OCI-LY7 (cell line): ENCODE measurements at regions of chr17 and their contacts with region 1.

Region 1: DNA sequence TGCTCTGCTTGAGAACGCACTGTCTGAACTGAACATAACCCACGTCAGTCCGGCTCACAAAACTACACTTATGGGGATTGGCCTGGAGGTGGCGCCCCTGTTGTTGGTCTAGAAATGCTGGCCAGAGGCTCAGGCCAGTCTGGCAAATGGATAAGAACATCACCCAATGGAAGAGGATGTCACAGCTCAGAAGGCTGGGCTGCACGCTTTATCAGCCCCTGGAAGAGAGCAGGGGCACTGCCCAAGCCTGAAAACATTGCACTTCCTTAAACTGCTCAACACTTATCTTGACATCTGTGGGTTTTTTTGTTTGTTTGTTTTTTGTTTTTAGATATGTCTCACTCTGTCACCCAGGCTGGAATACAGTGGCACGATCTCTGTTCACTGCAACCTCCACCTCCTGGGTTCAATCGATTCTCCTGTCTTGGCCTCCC is 24.8 kb upstream of the BPTF start:
- DNase-seq: peak; percentile 87
- H3K4me3 ChIP-seq: no peak overlapping the region
- H3K27ac ChIP-seq: no peak overlapping the region
- H3K4me1 ChIP-seq: peaks cover 23% of the 10 kb centered on the region
- CTCF ChIP-seq: peak; percentile 89

Region 2: GRCh38 chr17:67624886-67625656 is 175.4 kb before region 1 on chr17:
- CTCF ChIA-PET with region 1: no interaction called
- POLR2A ChIA-PET with region 1: no interaction called
- intact Hi-C with region 1: no loop called
- DNase-seq: no peak
- H3K4me3 ChIP-seq: no peak overlapping the region
- H3K27ac ChIP-seq: no peak overlapping the region
- H3K4me1 ChIP-seq: no peaks in the 10 kb centered on the region
- CTCF ChIP-seq: no peak

Region 3: DNA sequence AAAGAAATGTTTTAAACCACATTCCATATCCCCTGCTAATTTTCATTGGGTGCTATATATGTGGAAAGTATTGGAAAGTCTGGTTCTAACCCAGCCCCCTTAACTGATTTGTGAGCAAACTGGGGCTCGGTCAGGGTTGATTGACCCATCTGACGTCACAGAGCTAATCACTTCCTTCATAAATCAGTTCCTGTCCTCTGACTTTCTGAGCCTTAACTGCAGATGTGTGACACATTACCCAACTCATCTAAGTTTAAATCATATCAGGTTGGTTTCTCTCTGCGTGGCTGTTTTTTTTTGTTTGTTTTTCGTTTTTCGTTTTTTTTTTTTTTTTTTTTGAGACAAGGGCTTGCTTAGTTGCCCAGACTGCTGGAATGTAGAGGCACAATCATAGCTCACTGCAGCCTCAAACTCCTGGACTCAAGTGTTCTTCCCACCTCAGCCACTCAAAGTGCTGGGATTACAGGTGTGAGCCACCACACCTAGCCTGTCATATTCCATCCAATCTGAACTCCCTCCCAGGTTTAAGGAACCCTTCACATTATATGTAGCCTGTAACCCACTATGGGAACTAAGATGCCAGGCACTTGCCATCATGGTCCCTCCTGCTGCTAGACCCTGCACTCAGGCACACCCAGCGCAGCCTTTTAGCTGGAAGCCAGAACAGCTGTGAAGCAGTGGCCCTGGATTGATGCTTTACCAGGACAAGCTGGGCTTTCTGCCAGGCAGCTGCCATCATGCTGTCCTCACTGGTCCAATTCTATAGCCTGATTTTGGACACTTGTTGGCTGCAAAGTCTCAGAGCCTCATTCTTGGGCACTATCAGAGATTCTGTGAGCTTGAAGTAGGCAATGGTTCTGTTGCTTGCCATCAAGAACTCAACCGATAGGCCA is 17.8 kb after region 1 on chr17:
- CTCF ChIA-PET with region 1: interaction called, 4 read pairs
- POLR2A ChIA-PET with region 1: interaction called, 16 read pairs
- intact Hi-C with region 1: no loop called
- DNase-seq: peak; percentile 88
- H3K4me3 ChIP-seq: peak overlapping the region; percentile 31
- H3K27ac ChIP-seq: peak overlapping the region; percentile 86
- H3K4me1 ChIP-seq: peaks cover 97% of the 10 kb centered on the region
- CTCF ChIP-seq: no peak

Region 4: DNA sequence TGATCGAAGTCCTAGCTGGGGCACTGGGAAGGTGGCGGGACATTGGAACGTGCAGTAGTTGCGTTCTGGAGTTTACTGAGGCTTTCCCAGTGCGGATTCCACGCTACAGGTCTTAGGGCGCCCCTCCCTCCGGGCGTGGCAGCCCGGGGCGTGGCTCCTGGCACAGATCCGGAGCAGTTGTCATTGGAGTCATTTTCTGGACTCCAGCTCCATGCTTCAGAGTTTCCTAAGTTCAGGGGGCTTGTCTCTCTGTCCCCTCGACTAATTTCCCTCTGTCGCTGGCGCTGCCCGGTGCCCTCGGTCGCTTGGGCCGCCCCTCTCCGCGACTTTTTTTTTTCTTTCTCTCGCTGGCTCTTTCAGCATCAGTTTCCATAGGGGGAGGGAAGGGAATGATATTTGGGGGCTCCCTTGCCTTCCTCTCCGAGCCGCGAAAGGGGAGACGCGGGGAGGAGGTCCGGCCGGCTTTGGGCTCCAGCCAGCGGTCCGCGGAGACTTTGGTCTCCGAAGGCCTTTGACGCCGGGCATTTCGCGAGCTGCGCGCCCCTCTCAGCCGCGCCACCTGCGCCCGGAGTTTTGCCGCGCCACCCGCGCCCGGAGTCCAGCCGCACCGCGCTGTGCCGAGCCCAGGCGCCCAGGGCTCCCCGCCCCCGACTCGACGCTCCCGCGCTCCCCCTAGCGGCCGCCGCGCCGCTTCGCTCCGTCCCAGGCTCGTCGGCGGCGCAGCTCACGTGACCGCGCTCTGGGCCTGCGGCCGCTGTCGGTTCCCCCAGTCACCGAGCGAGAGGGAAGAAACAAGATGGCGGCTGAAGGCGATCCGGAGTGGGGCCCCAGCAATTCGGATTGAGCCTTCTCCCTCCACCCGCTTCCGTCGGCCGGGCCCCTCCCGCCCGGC is 24.5 kb after region 1 on chr17 and contains the start of gene BPTF:
- CTCF ChIA-PET with region 1: interaction called, 3 read pairs
- POLR2A ChIA-PET with region 1: interaction called, 6 read pairs
- intact Hi-C with region 1: loop called (anchors 1 kb)
- DNase-seq: peak; percentile 96
- H3K4me3 ChIP-seq: peak within 1 kb of the TSS; percentile 88
- H3K27ac ChIP-seq: peak within 1 kb of the TSS; percentile 89
- H3K4me1 ChIP-seq: peaks cover 68% of the 10 kb centered on the region
- CTCF ChIP-seq: peak; percentile 83
- total RNA-seq, gene BPTF: 86.1 and 104 TPM in 2 replicates

Region 5: GRCh38 chr17:67942810-67943209 is 142.3 kb after region 1 on chr17:
- CTCF ChIA-PET with region 1: no interaction called
- POLR2A ChIA-PET with region 1: interaction called, 3 read pairs
- intact Hi-C with region 1: loop called (anchors 10 kb)
- DNase-seq: peak; percentile 15
- H3K4me3 ChIP-seq: no peak overlapping the region
- H3K27ac ChIP-seq: no peak overlapping the region
- H3K4me1 ChIP-seq: no peaks in the 10 kb centered on the region
- CTCF ChIP-seq: peak; percentile 79

Region 6: GRCh38 chr17:68011199-68011665 is 210.7 kb after region 1 on chr17:
- CTCF ChIA-PET with region 1: no interaction called
- POLR2A ChIA-PET with region 1: interaction called, 5 read pairs
- intact Hi-C with region 1: loop called (anchors 2 kb)
- DNase-seq: peak; percentile 77
- H3K4me3 ChIP-seq: peak overlapping the region; percentile 47
- H3K27ac ChIP-seq: no peak overlapping the region
- H3K4me1 ChIP-seq: peaks cover 3% of the 10 kb centered on the region
- CTCF ChIP-seq: peak; percentile 94